ENCODE measurements at regions of chr7 and their contacts with region 1.

Region 1: DNA sequence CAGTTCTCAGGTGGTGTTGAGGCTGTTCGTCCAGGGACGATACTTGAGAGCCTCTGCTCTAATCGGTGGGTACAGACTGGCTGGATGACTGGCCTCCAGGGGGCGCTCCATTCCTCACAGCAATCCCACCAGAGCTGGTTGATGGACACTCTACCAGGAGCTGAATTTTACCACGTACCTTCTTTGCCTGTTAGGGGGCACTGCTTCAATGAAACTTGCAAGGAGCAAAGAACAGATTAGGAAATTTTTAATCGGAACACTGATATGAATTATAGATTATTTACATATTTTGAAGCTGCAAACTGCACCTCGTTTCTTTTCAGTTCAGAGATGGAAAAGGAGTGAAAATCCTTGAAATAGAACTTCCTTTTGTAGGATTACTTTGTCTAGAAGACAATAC is 44.9 kb downstream of the KBTBD2 start:
- DNase-seq: peak; percentile 83 to 86 (median 84)
- H3K4me3 ChIP-seq: no peak overlapping the region
- H3K4me3 Mint-ChIP-seq: peak overlapping the region in 4 of 8 donors; percentile 33 to 50 (median 44)
- H3K27ac ChIP-seq: no peak overlapping the region
- H3K27ac Mint-ChIP-seq: peak overlapping the region in 4 of 7 donors; percentile 1 to 65 (median 50)
- H3K4me1 ChIP-seq: no peaks in the 10 kb centered on the region
- H3K4me1 Mint-ChIP-seq: peaks cover 5 to 7% (median 6%) of the 10 kb centered on the region in 4 donors
- H3K27me3 ChIP-seq: no peaks in the 10 kb centered on the region
- H3K27me3 Mint-ChIP-seq: peaks cover 12 to 19% of the 10 kb centered on the region in 2 donors

Region 2: GRCh38 chr7:32860090-32860489 is 13.4 kb after region 1 on chr7:
- CTCF ChIA-PET with region 1: interaction called, 11 read pairs
- POLR2A ChIA-PET with region 1: no interaction called
- intact Hi-C with region 1: no loop called
- DNase-seq: no peak
- H3K4me3 ChIP-seq: no peak overlapping the region
- H3K4me3 Mint-ChIP-seq: no peak overlapping the region
- H3K27ac ChIP-seq: no peak overlapping the region
- H3K27ac Mint-ChIP-seq: no peak overlapping the region
- H3K4me1 ChIP-seq: no peaks in the 10 kb centered on the region
- H3K4me1 Mint-ChIP-seq: peaks cover 0 to 13% (median 3%) of the 10 kb centered on the region in 4 donors
- H3K27me3 ChIP-seq: no peaks in the 10 kb centered on the region
- H3K27me3 Mint-ChIP-seq: peaks cover 0 to 5% of the 10 kb centered on the region in 2 donors

Region 3: GRCh38 chr7:32891800-32892520 is 45.3 kb after region 1 on chr7:
- CTCF ChIA-PET with region 1: interaction called, 65 read pairs
- POLR2A ChIA-PET with region 1: interaction called, 29 read pairs
- intact Hi-C with region 1: loop called (anchors 1 kb)
- DNase-seq: peak; percentile 96 to 98 (median 98)
- H3K4me3 ChIP-seq: peak overlapping the region; percentile 80 to 83
- H3K4me3 Mint-ChIP-seq: peak overlapping the region; percentile 92 to 97 (median 94)
- H3K27ac ChIP-seq: peak overlapping the region; percentile 99
- H3K27ac Mint-ChIP-seq: peak overlapping the region; percentile 95 to 100 (median 99)
- H3K4me1 ChIP-seq: peaks cover 46% of the 10 kb centered on the region
- H3K4me1 Mint-ChIP-seq: peaks cover 37 to 59% (median 47%) of the 10 kb centered on the region in 4 donors
- H3K27me3 ChIP-seq: no peaks in the 10 kb centered on the region
- H3K27me3 Mint-ChIP-seq: no peaks in the 10 kb centered on the region

Region 4: GRCh38 chr7:32942786-32943653 is 96.3 kb after region 1 on chr7:
- CTCF ChIA-PET with region 1: interaction called, 287 read pairs
- POLR2A ChIA-PET with region 1: interaction called, 16 read pairs
- intact Hi-C with region 1: loop called (anchors 1 kb)
- DNase-seq: peak; percentile 51 to 70 (median 63)
- H3K4me3 ChIP-seq: peak overlapping the region; percentile 8 to 62
- H3K4me3 Mint-ChIP-seq: peak overlapping the region; percentile 68 to 88 (median 76)
- H3K27ac ChIP-seq: peak overlapping the region; percentile 32
- H3K27ac Mint-ChIP-seq: peak overlapping the region in 3 of 7 donors; percentile 17 to 48 (median 35)
- H3K4me1 ChIP-seq: peaks cover 9% of the 10 kb centered on the region
- H3K4me1 Mint-ChIP-seq: peaks cover 5 to 11% (median 7%) of the 10 kb centered on the region in 4 donors
- H3K27me3 ChIP-seq: no peaks in the 10 kb centered on the region
- H3K27me3 Mint-ChIP-seq: peaks cover 2 to 5% of the 10 kb centered on the region in 2 donors

Region 5: DNA sequence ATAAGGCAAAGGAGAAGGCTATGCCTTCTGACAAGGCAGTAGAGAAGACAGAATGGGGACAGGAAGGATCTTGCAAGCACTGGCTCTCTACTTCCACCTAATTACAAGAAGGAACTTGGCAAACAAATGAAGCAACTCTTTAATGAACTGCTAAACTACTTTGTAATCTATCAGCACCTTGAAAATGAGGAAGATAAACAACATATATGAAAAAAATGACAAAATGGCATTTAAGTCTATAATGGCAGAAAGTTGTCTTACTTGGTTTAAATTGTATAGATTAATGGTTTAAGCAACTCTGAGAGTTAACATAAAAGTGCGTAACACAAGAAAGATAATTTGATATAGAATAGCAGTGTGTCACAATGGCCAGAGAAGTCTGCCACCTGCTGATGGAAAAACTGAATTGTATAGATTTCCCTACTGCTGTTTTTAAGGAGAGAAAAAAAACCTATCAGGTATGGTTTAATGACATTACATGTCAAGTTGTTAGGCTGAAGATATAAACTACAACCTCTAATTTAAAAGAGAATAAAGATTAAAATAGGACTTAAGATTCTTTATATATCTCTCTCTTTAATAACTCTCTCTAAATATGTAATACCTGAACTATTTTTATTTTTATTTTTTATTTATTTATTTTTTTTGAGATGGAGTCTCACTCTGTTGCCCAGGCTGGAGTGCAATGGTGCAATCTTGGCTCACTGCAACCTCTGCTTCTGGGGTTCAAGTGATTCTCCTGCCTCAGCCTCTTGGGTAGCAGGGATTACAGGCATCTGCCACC is 204.0 kb after region 1 on chr7:
- CTCF ChIA-PET with region 1: interaction called, 33 read pairs
- POLR2A ChIA-PET with region 1: no interaction called
- intact Hi-C with region 1: loop called (anchors 1 kb)
- DNase-seq: peak; percentile 41 to 61 (median 55)
- H3K4me3 ChIP-seq: no peak overlapping the region
- H3K4me3 Mint-ChIP-seq: peak overlapping the region in 1 of 8 donors; percentile 1
- H3K27ac ChIP-seq: no peak overlapping the region
- H3K27ac Mint-ChIP-seq: peak overlapping the region in 4 of 7 donors; percentile 10 to 39 (median 29)
- H3K4me1 ChIP-seq: peaks cover 50% of the 10 kb centered on the region
- H3K4me1 Mint-ChIP-seq: peaks cover 28 to 70% (median 47%) of the 10 kb centered on the region in 4 donors
- H3K27me3 ChIP-seq: no peaks in the 10 kb centered on the region
- H3K27me3 Mint-ChIP-seq: no peaks in the 10 kb centered on the region